HepG2 (cell line): ENCODE measurements at regions of chr2 and their contacts with region 1.

Region 1: GRCh38 chr2:203869223-203870042 is 1.9 kb downstream of the CTLA4 start:
- DNase-seq: no peak
- ATAC-seq: no peak
- H3K4me3 ChIP-seq: no peak overlapping the region
- H3K27ac ChIP-seq: no peak overlapping the region
- H3K4me1 ChIP-seq: no peaks in the 10 kb centered on the region
- H3K27me3 ChIP-seq: peaks cover 0 to 23% of the 10 kb centered on the region in 2 experiments; a peak in 2 of 5 replicates
- CTCF ChIP-seq: no peak
- EP300 ChIP-seq: no peak
- POLR2A ChIP-seq: no peak
- RAD21 ChIP-seq: no peak

Region 2: DNA sequence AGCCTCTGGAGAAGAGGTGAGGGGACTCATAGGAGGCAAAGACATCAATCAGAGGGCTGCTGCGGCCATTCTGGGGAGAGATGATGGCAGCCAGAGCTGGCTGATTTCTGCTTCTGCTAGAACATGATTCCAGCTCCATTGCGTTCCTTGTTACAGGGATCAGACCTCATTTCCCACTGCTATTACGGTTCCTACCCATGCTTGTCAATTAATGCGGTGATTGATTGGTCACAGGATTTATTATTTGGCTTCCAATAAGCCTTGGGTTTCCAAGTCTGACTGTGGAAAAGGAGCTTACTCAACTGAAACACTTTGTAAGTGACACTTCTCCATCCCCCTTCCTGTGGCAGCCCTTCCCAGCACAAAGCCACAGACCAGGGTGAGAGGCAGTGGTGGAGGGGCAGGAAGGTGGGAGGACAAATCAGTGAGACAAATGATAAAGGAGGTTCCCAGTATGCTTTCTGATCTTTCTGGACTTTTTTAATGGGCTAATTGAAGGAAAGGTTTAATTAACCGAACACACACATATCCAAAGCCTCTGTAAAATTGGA is 28.7 kb before region 1 on chr2:
- CTCF ChIA-PET with region 1: no interaction called
- POLR2A ChIA-PET with region 1: no interaction called
- in situ Hi-C with region 1: no loop called
- intact Hi-C with region 1: loop called (anchors 1 kb)
- DNase-seq: no peak
- ATAC-seq: no peak
- H3K4me3 ChIP-seq: no peak overlapping the region
- H3K27ac ChIP-seq: no peak overlapping the region
- H3K4me1 ChIP-seq: no peaks in the 10 kb centered on the region
- H3K27me3 ChIP-seq: peaks cover 2 to 20% of the 10 kb centered on the region in 2 experiments; a peak in 2 of 5 replicates
- CTCF ChIP-seq: no peak
- EP300 ChIP-seq: no peak
- POLR2A ChIP-seq: no peak
- RAD21 ChIP-seq: no peak